ENCODE measurements at regions of chr3 and their contacts with region 1.

Region 1: GRCh38 chr3:52056968-52057805 is 816 bp upstream of the DUSP7 start:
- DNase-seq: peak; percentile 100
- H3K4me3 Mint-ChIP-seq: peak overlapping the region; percentile 87
- H3K27ac Mint-ChIP-seq: peak overlapping the region; percentile 95
- H3K4me1 Mint-ChIP-seq: peaks cover 33% of the 10 kb centered on the region
- H3K27me3 Mint-ChIP-seq: no peaks in the 10 kb centered on the region

Region 2: GRCh38 chr3:51813539-51813938 is 243.6 kb before region 1 on chr3:
- CTCF ChIA-PET with region 1: no interaction called
- POLR2A ChIA-PET with region 1: no interaction called
- DNase-seq: no peak
- H3K4me3 Mint-ChIP-seq: no peak overlapping the region
- H3K27ac Mint-ChIP-seq: no peak overlapping the region
- H3K4me1 Mint-ChIP-seq: no peaks in the 10 kb centered on the region
- H3K27me3 Mint-ChIP-seq: peaks cover 10% of the 10 kb centered on the region

Region 3: DNA sequence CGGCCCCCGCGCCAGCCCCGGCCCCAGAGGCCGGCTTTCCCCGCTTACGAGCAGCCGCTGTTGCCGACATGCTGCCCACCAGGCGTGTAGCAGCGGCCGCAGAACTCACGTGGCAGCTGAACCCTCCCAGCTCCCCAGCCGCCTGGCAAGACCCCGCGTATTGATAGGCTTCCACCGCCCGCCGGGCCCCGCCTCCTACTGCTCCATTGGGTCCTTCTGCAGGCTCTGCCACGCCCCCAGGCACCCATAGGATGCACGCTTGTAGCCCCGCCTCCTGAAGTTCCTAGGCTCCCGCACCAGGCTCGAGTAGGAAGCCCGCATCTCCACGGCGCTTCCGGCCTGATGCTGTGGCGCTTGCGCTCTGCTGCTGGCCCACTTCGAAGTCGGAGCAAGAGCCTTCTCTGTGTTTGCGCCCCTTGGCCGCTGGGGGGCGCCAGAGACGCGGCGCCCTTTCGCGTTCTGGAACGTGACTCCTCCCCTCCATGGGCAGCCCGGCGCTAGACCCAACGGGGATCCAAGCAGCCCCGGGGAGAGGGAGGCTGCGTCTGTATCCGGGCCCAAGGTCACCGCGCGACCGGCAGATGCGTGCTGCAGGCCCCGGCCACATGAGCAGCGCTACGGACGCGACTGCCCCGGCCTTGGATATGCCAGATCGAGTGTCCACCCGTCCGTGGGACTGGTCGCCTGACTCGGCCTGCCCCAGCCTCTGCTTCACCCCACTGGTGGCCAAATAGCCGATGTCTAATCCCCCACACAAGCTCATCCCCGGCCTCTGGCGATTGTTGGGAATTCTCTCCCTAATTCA is 115.2 kb before region 1 on chr3 and contains the starts of genes PARP3 and RRP9:
- CTCF ChIA-PET with region 1: interaction called, 12 read pairs
- POLR2A ChIA-PET with region 1: no interaction called
- DNase-seq: peak; percentile 100
- H3K4me3 Mint-ChIP-seq: peak within 1 kb of the TSS; percentile 92
- H3K27ac Mint-ChIP-seq: peak within 1 kb of the TSS; percentile 92
- H3K4me1 Mint-ChIP-seq: peaks cover 45% of the 10 kb centered on the region
- H3K27me3 Mint-ChIP-seq: no peaks in the 10 kb centered on the region
- total RNA-seq, gene PARP3: 22.1 to 22.9 TPM
- total RNA-seq, gene RRP9: 24.3 to 25.1 TPM

Region 4: GRCh38 chr3:51982782-51983577 is 74.2 kb before region 1 on chr3 and contains the start of gene ACY1:
- CTCF ChIA-PET with region 1: interaction called, 10 read pairs
- POLR2A ChIA-PET with region 1: no interaction called
- DNase-seq: peak; percentile 74
- H3K4me3 Mint-ChIP-seq: peak within 1 kb of the TSS; percentile 91
- H3K27ac Mint-ChIP-seq: peak within 1 kb of the TSS; percentile 88
- H3K4me1 Mint-ChIP-seq: peaks cover 29% of the 10 kb centered on the region
- H3K27me3 Mint-ChIP-seq: no peaks in the 10 kb centered on the region
- total RNA-seq, gene ACY1: 16.5 to 19.4 TPM

Region 5: DNA sequence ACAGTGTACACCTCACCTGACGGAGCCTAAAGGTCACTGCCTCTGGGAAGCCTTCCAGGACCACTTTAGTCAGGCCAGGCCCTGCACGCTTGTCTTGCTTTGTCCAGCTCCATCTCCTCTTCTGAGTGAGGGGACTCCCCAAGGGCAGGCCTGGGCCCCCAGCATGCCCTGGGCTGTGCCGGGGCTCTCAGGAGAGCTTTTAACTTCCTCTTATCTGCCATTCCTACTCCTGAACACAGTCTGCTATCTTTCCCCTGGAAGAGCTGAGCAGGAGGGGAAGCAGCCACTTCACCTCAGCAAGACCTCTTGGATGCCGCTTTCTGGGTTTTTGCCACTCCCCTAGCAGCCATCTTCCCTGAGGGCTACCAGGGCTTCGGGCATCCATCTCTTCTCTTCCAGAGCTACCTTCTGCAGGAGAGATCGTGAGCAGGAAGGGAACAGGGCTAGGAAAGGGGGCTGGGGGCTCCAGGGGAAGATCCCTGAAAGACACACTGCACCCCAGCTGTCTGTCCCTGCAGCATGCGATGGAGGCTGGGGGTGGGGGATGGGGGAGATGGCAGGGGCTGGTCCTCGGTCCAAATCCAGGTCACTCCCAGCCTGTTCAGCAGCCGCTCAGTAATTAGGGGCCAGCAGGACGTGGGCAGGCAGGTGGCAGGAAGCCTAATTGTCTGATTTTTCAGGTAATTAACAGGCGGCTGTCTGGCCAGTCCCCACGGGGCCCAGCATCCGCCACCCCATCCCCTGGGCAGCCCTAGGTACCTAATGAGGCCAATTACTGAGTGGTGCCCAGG is 41.6 kb before region 1 on chr3:
- CTCF ChIA-PET with region 1: interaction called, 10 read pairs
- POLR2A ChIA-PET with region 1: no interaction called
- DNase-seq: no peak
- H3K4me3 Mint-ChIP-seq: no peak overlapping the region
- H3K27ac Mint-ChIP-seq: no peak overlapping the region
- H3K4me1 Mint-ChIP-seq: no peaks in the 10 kb centered on the region
- H3K27me3 Mint-ChIP-seq: no peaks in the 10 kb centered on the region

Region 6: DNA sequence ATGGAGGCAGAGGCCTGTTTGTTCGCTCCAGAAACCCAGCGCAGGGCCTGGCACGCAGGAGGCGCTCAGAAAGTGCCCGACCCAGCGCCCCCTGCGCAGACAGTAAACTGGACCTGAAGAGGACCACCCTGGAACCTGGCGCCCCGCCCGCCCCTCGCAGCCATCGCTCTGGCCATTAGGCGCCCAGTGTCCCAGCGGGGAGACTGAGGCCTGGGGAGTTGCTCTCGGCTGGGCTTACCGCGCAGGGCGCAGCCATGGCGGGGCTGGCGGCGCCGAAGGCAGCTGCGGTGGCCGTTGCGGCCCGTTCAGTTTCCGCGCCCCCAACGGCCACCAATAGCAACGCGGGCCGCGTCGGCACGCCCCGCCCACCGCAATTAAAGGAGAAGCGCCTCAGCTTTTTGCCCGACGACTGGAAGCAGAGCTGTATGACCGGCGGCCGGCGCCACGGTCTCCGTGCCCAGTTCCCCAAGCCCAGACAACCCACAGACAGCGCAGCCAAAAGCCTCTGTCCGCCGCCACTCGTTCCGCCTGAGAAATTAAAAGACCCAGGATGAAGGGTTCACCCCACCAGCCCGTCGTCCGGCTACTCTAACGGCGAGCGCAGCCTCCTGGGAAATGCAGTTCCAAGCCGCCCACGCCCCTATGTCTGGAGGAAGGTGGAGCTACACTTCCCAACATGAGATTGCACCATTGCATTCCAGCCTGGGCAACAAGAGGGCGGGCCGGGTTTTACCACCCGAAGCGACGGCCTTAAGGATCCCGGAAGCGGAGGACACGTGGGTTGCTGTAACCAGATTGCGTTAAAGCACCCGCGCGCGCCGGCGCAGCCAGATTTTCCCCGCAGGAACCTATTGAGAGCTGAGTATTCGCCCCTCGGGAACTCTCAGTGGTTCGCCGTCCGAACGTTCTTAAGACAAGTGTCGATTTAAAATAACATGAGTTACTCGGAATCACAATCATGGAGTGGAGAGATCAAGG is 97.2 kb after region 1 on chr3 and contains the start of gene POC1A:
- CTCF ChIA-PET with region 1: interaction called, 5 read pairs
- POLR2A ChIA-PET with region 1: interaction called, 14 read pairs
- DNase-seq: peak; percentile 93
- H3K4me3 Mint-ChIP-seq: peak within 1 kb of the TSS; percentile 93
- H3K27ac Mint-ChIP-seq: peak within 1 kb of the TSS; percentile 97
- H3K4me1 Mint-ChIP-seq: peaks cover 31% of the 10 kb centered on the region
- H3K27me3 Mint-ChIP-seq: peaks cover 1% of the 10 kb centered on the region
- total RNA-seq, gene POC1A: 26.9 to 28.2 TPM